ENCODE measurements at regions of chr1 and their contacts with region 1.

Region 1: GRCh38 chr1:8116893-8117264 is 90.8 kb upstream of the ERRFI1 start:
- DNase-seq: peak; percentile 71 to 89 (median 86)
- ATAC-seq: peak; percentile 90 to 94
- H3K4me3 ChIP-seq: no peak overlapping the region
- H3K27ac ChIP-seq: peak overlapping the region; percentile 89
- H3K4me1 ChIP-seq: peaks cover 16% of the 10 kb centered on the region
- H3K27me3 ChIP-seq: no peaks in the 10 kb centered on the region

Region 2: DNA sequence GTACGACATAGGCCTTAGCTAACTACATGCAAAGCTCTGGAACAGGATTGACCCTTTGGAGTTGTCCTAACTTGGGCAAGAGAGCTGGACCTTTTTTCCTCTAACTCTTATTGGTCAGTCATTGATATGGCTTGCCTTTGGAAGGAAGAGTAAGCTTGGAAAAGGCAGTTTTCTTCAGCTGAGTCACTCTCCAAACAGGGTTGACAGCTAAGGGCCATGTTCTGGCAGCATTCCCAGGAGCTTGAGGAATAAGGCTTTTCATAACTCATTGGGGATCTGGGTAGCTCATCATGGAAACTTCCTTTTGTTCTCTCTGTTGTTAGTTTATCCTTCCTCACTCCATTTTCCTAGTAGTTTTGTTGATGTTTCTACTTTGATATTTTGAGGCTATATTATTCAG is 76.3 kb before region 1 on chr1:
- intact Hi-C with region 1: loop called in 1 of 4 experiments (anchors 10 kb)
- DNase-seq: peak; percentile 66 to 82 (median 82)
- ATAC-seq: peak; percentile 77 to 94
- H3K4me3 ChIP-seq: no peak overlapping the region
- H3K27ac ChIP-seq: no peak overlapping the region
- H3K4me1 ChIP-seq: no peaks in the 10 kb centered on the region
- H3K27me3 ChIP-seq: no peaks in the 10 kb centered on the region

Region 3: GRCh38 chr1:8463144-8463927 is 346.5 kb after region 1 on chr1:
- intact Hi-C with region 1: no loop called
- DNase-seq: peak in 1 of 3 donors; percentile 60
- ATAC-seq: peak; percentile 54 to 68
- H3K4me3 ChIP-seq: no peak overlapping the region
- H3K27ac ChIP-seq: peak overlapping the region; percentile 99
- H3K4me1 ChIP-seq: peaks cover 17% of the 10 kb centered on the region
- H3K27me3 ChIP-seq: no peaks in the 10 kb centered on the region

Measured in right cardiac atrium (tissue), 5 donors.